ENCODE measurements at regions of chr21 and their contacts with region 1.

Region 1: DNA sequence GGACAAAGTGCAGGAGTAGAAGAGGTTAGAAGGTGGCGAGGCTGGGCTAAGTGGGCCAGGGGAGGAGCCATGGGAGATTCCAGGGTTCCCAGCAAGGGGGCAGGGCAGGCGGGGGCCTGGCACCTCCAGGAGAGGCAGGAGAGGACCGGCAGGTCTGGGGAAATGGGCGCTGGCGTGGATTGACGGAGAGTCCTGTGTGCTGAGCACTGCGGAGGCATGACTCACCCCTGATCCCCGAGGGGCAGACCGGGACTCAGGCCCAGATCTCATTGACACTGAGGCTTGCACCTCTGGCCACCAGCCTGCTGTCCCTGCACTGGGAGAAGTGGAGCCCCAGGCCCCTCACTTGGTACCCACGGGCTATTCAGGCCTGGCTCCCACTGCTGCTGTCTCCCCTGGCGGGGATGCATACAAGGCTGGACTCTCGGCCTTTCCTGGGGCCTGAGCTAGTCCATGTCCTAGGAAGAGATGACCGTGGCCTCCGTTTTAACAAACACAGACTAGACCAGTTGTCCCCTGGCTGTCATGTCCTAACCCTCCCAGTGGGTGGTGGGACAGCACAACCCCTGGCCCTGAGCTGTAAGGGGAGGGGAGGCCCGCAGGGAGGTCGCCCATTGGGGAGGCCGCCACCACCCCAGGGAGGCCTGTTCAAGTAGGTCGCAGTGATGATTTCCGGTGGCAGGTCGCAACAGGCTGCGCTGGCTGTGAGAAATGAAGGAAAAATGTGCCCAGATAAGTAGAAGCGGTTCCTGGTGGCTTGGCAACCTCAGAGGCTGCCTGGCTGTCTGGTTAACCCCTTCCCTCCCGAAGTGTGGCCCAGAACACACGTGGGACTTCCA is 39.7 kb downstream of the RIPK4 start:
- DNase-seq: peak; percentile 93
- H3K4me3 ChIP-seq: peak overlapping the region in 1 of 3 experiments; percentile 28
- H3K27ac ChIP-seq: peak overlapping the region; percentile 84
- H3K4me1 ChIP-seq: peaks cover 56% of the 10 kb centered on the region
- H3K27me3 ChIP-seq: no peaks in the 10 kb centered on the region
- CTCF ChIP-seq: no peak

Region 2: DNA sequence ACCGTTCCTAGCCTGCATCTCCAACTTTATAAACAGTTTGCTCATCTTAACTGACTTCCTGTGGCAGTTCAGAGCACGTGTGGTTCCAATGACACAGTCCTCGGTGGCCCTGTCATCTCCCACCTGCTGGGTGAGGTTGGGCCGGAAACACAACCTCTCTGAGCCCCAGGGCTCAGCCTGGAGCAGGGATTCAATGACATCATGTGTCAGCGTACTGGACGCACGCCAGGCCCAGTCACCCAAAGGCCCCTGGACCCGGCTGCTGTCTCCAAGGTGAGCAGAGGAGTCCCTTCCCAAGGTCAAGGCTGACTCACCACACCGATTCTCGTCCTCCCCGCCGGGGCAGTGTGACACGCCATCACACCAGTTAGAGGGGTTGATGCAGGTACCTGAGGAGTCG is 239.1 kb before region 1 on chr21:
- CTCF ChIA-PET with region 1: no interaction called
- dilution Hi-C with region 1: no loop called
- in situ Hi-C with region 1: no loop called
- intact Hi-C with region 1: no loop called
- DNase-seq: no peak
- H3K4me3 ChIP-seq: no peak overlapping the region
- H3K27ac ChIP-seq: no peak overlapping the region
- H3K4me1 ChIP-seq: no peaks in the 10 kb centered on the region
- H3K27me3 ChIP-seq: peaks cover 4% of the 10 kb centered on the region
- CTCF ChIP-seq: no peak

Region 3: GRCh38 chr21:41630249-41630648 is 96.9 kb before region 1 on chr21:
- CTCF ChIA-PET with region 1: no interaction called
- dilution Hi-C with region 1: no loop called
- in situ Hi-C with region 1: no loop called
- intact Hi-C with region 1: loop called (anchors 5 kb)
- DNase-seq: peak; percentile 99
- H3K4me3 ChIP-seq: no peak overlapping the region
- H3K27ac ChIP-seq: peak overlapping the region; percentile 78
- H3K4me1 ChIP-seq: peaks cover 49% of the 10 kb centered on the region
- H3K27me3 ChIP-seq: no peaks in the 10 kb centered on the region
- CTCF ChIP-seq: no peak

Region 4: GRCh38 chr21:41715649-41716281 is 11.4 kb before region 1 on chr21:
- CTCF ChIA-PET with region 1: no interaction called
- dilution Hi-C with region 1: no loop called
- in situ Hi-C with region 1: no loop called
- intact Hi-C with region 1: loop called (anchors 1 kb)
- DNase-seq: peak; percentile 98
- H3K4me3 ChIP-seq: no peak overlapping the region
- H3K27ac ChIP-seq: peak overlapping the region; percentile 88
- H3K4me1 ChIP-seq: peaks cover 21% of the 10 kb centered on the region
- H3K27me3 ChIP-seq: no peaks in the 10 kb centered on the region
- CTCF ChIP-seq: no peak

Region 5: DNA sequence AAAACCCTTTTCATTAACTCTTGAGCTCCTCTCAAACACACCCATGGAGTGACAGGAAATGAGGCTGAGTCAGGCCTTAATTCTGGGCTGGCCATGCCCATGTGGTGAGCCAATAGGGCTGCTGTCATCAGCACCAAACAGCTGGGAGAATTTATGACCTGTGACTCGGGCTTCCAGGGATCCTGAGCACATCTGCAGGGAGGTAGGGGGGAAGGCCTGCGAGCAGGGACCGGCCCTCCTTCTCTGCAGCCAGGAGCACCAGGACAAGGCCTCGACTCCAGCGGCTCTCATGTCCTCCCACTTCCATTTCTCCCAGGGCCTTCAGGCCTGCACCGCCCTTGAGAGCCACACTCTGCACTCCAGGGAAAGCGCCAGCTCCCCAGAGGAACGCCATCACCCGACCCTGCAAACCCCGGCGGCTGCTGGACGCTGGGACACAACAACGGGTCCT is 25.1 kb after region 1 on chr21:
- CTCF ChIA-PET with region 1: no interaction called
- dilution Hi-C with region 1: no loop called
- in situ Hi-C with region 1: no loop called
- intact Hi-C with region 1: loop called (anchors 1 kb)
- DNase-seq: peak; percentile 83
- H3K4me3 ChIP-seq: peak overlapping the region in 1 of 3 experiments; percentile 5
- H3K27ac ChIP-seq: peak overlapping the region; percentile 50
- H3K4me1 ChIP-seq: peaks cover 74% of the 10 kb centered on the region
- H3K27me3 ChIP-seq: no peaks in the 10 kb centered on the region
- CTCF ChIP-seq: no peak

Region 6: DNA sequence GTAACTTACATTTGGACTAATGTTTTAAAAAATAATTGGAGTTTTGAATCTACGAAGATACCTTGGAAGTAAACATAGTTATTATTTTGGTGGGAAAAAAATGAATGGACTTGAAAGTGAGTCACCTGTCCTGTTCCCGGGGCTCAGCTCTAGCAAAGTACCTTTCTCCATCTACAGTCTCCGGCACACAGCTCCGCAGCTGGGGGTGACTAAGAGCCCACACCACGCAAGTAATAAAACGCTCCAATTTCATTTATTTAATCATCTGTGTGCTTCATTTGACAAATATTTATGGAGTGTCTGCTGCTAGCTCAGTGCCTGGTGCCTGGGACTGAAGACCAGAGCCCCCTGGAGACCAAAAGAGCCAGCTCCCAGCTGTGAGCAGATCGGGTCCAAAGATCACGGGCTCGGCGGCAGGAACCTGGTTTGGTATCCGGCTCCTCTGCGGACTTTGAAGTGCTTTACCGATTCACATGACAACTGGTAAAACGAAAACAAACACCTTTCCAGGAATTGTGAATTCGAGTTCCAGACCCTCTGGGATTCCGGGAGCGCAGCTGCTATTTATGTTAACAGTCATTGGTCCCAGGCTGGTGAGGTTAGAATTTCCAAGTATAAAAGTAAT is 41.4 kb after region 1 on chr21:
- CTCF ChIA-PET with region 1: no interaction called
- dilution Hi-C with region 1: no loop called
- in situ Hi-C with region 1: no loop called
- intact Hi-C with region 1: loop called (anchors 1 kb)
- DNase-seq: peak; percentile 87
- H3K4me3 ChIP-seq: peak overlapping the region; percentile 87 to 94 (median 92)
- H3K27ac ChIP-seq: peak overlapping the region; percentile 95
- H3K4me1 ChIP-seq: peaks cover 28% of the 10 kb centered on the region
- H3K27me3 ChIP-seq: no peaks in the 10 kb centered on the region
- CTCF ChIP-seq: peak; percentile 24 to 47

Measured in mammary epithelial cell (primary cell).